IMR-90 (cell line): ENCODE measurements at regions of chr3 and their contacts with region 1.

Region 1: DNA sequence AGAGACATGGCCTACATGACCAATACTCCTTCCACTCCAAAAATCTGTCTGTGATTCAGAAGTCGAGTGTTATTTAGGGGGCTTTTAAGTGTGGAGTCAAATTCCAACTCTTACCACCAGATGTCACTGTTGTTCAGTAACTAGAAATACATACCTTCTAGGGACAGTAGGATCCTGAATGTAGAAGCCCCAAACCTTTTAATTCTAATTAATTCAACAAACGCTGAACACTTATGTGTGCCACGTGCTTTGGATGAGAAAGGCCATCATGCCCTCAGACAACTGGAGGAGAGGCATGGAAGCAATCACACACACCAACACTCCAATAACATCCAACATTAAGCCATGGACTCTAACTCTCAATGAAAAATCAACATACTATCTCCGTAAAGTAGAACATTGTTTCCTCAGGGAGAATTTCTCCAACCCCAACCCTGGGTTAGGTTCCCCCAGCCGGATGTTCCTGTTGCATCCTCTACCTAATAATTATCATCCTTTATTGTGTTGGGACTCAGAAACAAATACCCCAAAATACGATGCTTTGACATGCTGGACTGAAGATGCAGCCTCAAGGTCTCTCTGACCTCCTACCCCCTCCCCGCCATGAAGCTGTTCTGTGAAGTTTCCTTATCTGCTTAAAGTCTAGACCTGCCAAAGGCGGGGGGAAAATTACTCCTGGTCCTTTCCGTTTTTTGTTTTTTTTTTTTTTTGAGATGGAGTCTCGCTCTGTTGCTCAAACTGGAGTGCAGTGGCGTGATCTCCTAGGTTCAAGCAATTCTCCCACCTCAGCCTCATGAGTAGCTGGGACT is 8.0 kb upstream of the CCDC13 start:
- DNase-seq: peak; percentile 80
- ATAC-seq: peak; percentile 60
- H3K4me3 ChIP-seq: no peak overlapping the region
- H3K27ac ChIP-seq: no peak overlapping the region
- H3K4me1 ChIP-seq: peaks cover 15% of the 10 kb centered on the region
- H3K27me3 ChIP-seq: no peaks in the 10 kb centered on the region
- CTCF ChIP-seq: peak; percentile 72
- POLR2A ChIP-seq: no peak
- RAD21 ChIP-seq: peak; percentile 60

Region 2: DNA sequence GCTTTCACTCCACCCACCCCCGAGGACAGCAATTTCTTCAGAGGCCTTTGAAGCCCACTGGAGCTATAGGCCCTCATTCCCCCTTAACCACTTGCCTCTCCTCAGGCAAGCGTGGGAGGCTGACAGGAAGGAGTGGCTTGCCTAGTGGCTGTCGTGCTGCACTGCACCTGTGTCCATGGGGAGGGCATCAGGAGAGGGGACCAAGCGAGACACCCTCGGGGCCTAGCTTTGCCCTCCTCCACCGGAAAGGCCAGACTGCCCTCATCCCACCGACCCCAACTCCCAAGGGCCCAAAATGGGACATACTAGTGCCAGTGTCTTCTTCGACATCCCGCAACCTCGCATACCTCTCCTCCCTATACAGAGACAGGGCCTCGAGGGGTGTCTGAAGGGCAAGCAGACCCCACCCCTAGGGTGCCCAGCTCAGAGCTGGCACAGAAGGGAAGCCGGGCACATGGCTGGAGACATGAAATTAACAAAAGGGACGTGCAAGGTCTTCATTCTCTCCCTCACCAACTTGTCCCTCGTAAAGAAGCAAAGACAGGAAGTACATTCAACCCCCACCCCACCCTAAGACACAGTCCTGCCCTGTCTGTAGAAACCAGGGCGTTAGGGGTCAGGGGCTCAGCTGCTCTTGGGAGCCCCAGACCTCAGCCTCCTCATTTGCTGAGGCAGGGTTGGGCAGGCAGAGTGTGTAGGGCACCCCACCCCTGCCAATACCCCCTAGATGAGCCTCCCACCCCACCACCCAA is 254.3 kb before region 1 on chr3:
- CTCF ChIA-PET with region 1: no interaction called
- POLR2A ChIA-PET with region 1: no interaction called
- dilution Hi-C with region 1: no loop called
- in situ Hi-C with region 1: no loop called
- intact Hi-C with region 1: no loop called
- DNase-seq: no peak
- ATAC-seq: no peak
- H3K4me3 ChIP-seq: no peak overlapping the region
- H3K27ac ChIP-seq: no peak overlapping the region
- H3K4me1 ChIP-seq: no peaks in the 10 kb centered on the region
- H3K27me3 ChIP-seq: peaks cover 2% of the 10 kb centered on the region; the same call in 1 of the 2 replicates
- CTCF ChIP-seq: no peak
- POLR2A ChIP-seq: no peak
- RAD21 ChIP-seq: no peak

Region 3: GRCh38 chr3:42814914-42815507 is 33.9 kb after region 1 on chr3:
- CTCF ChIA-PET with region 1: no interaction called
- POLR2A ChIA-PET with region 1: no interaction called
- dilution Hi-C with region 1: no loop called
- in situ Hi-C with region 1: no loop called
- intact Hi-C with region 1: no loop called
- DNase-seq: no peak
- ATAC-seq: no peak
- H3K4me3 ChIP-seq: no peak overlapping the region
- H3K27ac ChIP-seq: no peak overlapping the region
- H3K4me1 ChIP-seq: no peaks in the 10 kb centered on the region
- H3K27me3 ChIP-seq: peaks cover 18% of the 10 kb centered on the region
- CTCF ChIP-seq: no peak
- POLR2A ChIP-seq: no peak
- RAD21 ChIP-seq: no peak

Region 4: DNA sequence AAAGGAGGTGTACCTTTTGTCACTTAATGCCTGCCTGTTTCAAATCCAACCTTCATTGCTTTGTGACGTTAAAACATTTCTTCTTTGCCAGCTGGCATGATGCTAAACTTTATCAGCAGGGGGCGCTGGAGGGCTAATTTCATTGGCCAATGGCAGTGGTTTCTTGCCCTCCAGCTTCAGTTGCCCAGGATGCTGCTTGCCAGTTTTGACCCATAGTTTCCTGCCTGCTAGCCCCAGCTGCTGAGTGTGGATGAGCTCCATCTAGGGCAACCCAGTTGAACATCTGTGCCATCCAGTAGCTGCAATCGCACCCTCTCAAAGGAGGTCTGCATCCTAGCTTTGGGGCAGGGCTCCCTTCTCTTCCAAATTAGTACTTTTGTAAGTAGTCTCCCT is 50.2 kb after region 1 on chr3:
- CTCF ChIA-PET with region 1: no interaction called
- POLR2A ChIA-PET with region 1: no interaction called
- dilution Hi-C with region 1: no loop called
- in situ Hi-C with region 1: loop called (anchors 5 kb)
- intact Hi-C with region 1: loop called (anchors 2 kb)
- DNase-seq: peak; percentile 25
- ATAC-seq: peak; percentile 56
- H3K4me3 ChIP-seq: no peak overlapping the region
- H3K27ac ChIP-seq: no peak overlapping the region
- H3K4me1 ChIP-seq: no peaks in the 10 kb centered on the region
- H3K27me3 ChIP-seq: peaks cover 20% of the 10 kb centered on the region
- CTCF ChIP-seq: peak; percentile 63
- POLR2A ChIP-seq: no peak
- RAD21 ChIP-seq: no peak

Region 5: DNA sequence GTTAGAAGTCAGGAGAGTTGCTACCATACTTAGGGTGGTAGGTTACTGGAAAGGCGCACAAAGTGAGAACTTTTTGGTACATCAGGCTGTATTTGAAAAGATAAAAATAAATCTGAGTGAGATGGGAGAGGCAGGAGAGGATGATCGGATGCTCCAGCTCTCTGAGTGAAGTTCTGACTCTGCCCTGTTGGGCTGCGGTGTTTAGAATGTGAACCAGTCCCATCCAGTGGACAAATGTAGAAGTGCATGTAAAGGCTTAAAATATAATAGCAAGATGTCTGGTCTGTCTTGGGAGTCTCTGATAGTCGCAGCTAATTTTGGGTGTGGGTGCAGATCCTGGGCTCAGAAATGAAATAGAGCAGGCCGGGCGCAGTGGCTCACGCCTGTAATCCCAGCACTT is 58.5 kb after region 1 on chr3:
- CTCF ChIA-PET with region 1: interaction called, 4 read pairs
- POLR2A ChIA-PET with region 1: no interaction called
- dilution Hi-C with region 1: no loop called
- in situ Hi-C with region 1: loop called (anchors 5 kb)
- intact Hi-C with region 1: loop called (anchors 1 kb)
- DNase-seq: peak; percentile 71
- ATAC-seq: peak; percentile 100
- H3K4me3 ChIP-seq: no peak overlapping the region
- H3K27ac ChIP-seq: no peak overlapping the region
- H3K4me1 ChIP-seq: no peaks in the 10 kb centered on the region
- H3K27me3 ChIP-seq: peaks cover 39% of the 10 kb centered on the region
- CTCF ChIP-seq: peak; percentile 78
- POLR2A ChIP-seq: no peak
- RAD21 ChIP-seq: peak; percentile 62

Region 6: GRCh38 chr3:42871592-42872196 is 90.6 kb after region 1 on chr3:
- CTCF ChIA-PET with region 1: no interaction called
- POLR2A ChIA-PET with region 1: no interaction called
- dilution Hi-C with region 1: no loop called
- in situ Hi-C with region 1: loop called (anchors 10 kb)
- intact Hi-C with region 1: no loop called
- DNase-seq: no peak
- ATAC-seq: no peak
- H3K4me3 ChIP-seq: no peak overlapping the region
- H3K27ac ChIP-seq: no peak overlapping the region
- H3K4me1 ChIP-seq: no peaks in the 10 kb centered on the region
- H3K27me3 ChIP-seq: peaks cover 31% of the 10 kb centered on the region
- CTCF ChIP-seq: no peak
- POLR2A ChIP-seq: no peak
- RAD21 ChIP-seq: no peak

Region 7: GRCh38 chr3:42880601-42881451 is 99.7 kb after region 1 on chr3:
- CTCF ChIA-PET with region 1: no interaction called
- POLR2A ChIA-PET with region 1: no interaction called
- dilution Hi-C with region 1: no loop called
- in situ Hi-C with region 1: loop called (anchors 10 kb)
- intact Hi-C with region 1: loop called (anchors 1 kb)
- DNase-seq: peak; percentile 61
- ATAC-seq: peak; percentile 99
- H3K4me3 ChIP-seq: peak overlapping the region; percentile 48
- H3K27ac ChIP-seq: no peak overlapping the region; the same call in 1 of the 2 replicates
- H3K4me1 ChIP-seq: no peaks in the 10 kb centered on the region
- H3K27me3 ChIP-seq: peaks cover 13% of the 10 kb centered on the region
- CTCF ChIP-seq: peak; percentile 81
- POLR2A ChIP-seq: 0 out of 2 replicates have a peak, but pooled peaks have one; percentile 28
- RAD21 ChIP-seq: peak; percentile 80